Naive thymus-derived CD4-positive, alpha-beta T cell (primary cell): ENCODE measurements at regions of chr6 and their contacts with region 1.

Region 1: DNA sequence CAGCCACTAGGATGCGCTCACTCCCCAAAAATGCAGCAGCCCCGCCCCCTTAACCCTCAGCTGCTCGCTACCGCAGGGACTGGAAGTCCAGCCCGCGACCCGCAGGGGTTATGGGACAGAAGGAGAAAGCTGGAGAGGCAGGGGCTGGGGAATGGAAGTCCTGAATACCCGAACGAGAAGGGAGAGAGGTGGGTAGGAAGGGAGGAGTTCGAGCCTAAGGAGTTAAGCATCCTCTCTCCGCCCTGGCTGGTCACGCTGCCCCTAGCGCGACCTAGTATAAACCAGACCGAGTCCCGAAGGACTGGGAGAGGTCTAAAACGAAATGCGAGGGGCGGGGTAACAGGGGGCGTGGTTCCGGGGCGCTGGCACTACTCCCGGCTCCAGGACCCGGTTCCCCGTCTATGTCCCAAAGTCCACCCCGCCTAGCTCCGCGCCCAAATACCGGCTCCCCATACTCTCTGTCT is 448 bp upstream of the DDAH2 start:
- DNase-seq: peak; percentile 66 to 82 (median 77)
- ATAC-seq: peak; percentile 78
- H3K4me3 ChIP-seq: peak overlapping the region; percentile 92
- H3K4me3 Mint-ChIP-seq: peak overlapping the region; percentile 83 to 100 (median 97)
- H3K27ac ChIP-seq: peak overlapping the region; percentile 65
- H3K27ac Mint-ChIP-seq: peak overlapping the region; percentile 78 to 96 (median 89)
- H3K4me1 ChIP-seq: peaks cover 18 to 20% of the 10 kb centered on the region in 2 donors
- H3K4me1 Mint-ChIP-seq: peaks cover 20 to 65% (median 55%) of the 10 kb centered on the region in 7 donors
- H3K27me3 ChIP-seq: no peaks in the 10 kb centered on the region
- H3K27me3 Mint-ChIP-seq: no peaks in the 10 kb centered on the region

Region 2: DNA sequence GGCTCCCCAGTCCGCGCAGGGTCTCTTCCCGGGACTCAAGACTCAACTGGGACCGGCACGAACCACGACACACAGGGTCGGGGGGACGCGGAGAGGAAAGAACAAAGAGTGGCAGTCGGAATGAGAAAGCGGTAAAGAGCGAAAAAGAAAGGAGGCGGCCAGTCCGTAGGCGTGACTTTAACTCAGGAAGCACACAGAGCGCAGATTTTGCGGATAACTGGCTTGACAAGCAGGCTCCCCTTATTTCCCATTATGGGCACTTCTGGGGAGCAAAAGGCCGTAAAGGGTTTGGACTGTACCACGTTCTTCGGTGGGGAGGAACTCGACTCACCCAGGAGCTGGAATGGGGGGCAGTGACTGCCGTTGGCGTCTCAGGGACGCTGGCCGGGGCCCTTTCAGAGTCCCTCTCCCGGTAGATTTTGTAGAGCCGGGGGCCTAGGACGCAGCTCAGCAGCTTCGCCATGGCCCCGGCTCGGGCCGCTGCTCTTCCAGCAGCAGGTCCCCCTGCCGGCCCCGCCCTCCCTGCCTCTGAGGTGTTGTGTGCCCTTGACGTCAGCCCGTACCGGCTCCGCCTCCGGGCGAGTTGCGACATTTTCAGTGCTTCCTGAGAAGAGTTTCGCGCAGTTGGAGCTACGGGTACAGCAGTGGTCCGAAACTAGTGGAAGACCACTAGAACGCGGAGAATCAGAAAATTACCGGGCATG is 26.6 kb before region 1 on chr6 and contains the start of gene ABHD16A:
- CTCF ChIA-PET with region 1: interaction called, 3 read pairs
- POLR2A ChIA-PET with region 1: interaction called, 5 read pairs
- intact Hi-C with region 1: loop called in 1 of 2 experiments (anchors 1 kb)
- DNase-seq: peak; percentile 93 to 97 (median 96)
- ATAC-seq: peak; percentile 95
- H3K4me3 ChIP-seq: peak within 1 kb of the TSS; percentile 98
- H3K4me3 Mint-ChIP-seq: peak within 1 kb of the TSS; percentile 92 to 100 (median 98)
- H3K27ac ChIP-seq: peak within 1 kb of the TSS; percentile 98
- H3K27ac Mint-ChIP-seq: peak within 1 kb of the TSS; percentile 95 to 98 (median 97)
- H3K4me1 ChIP-seq: peaks cover 21 to 28% of the 10 kb centered on the region in 2 donors
- H3K4me1 Mint-ChIP-seq: peaks cover 16 to 39% (median 31%) of the 10 kb centered on the region in 7 donors
- H3K27me3 ChIP-seq: no peaks in the 10 kb centered on the region
- H3K27me3 Mint-ChIP-seq: peaks cover 0 to 2% (median 0%) of the 10 kb centered on the region in 5 donors
- total RNA-seq, gene ABHD16A: 60.1 to 71.7 (median 65.2) TPM

Region 3: GRCh38 chr6:31795616-31796298 is 66.2 kb after region 1 on chr6 and contains the start of gene VARS1:
- CTCF ChIA-PET with region 1: interaction called, 13 read pairs
- POLR2A ChIA-PET with region 1: interaction called, 7 read pairs
- intact Hi-C with region 1: loop called in 1 of 2 experiments (anchors 1 kb)
- DNase-seq: peak; percentile 75 to 92 (median 85)
- ATAC-seq: peak; percentile 96
- H3K4me3 ChIP-seq: peak within 1 kb of the TSS; percentile 76
- H3K4me3 Mint-ChIP-seq: peak within 1 kb of the TSS; percentile 85 to 99 (median 96)
- H3K27ac ChIP-seq: peak within 1 kb of the TSS; percentile 93
- H3K27ac Mint-ChIP-seq: peak within 1 kb of the TSS; percentile 80 to 99 (median 98)
- H3K4me1 ChIP-seq: peaks cover 24 to 32% of the 10 kb centered on the region in 2 donors
- H3K4me1 Mint-ChIP-seq: peaks cover 12 to 55% (median 36%) of the 10 kb centered on the region in 7 donors
- H3K27me3 ChIP-seq: no peaks in the 10 kb centered on the region
- H3K27me3 Mint-ChIP-seq: no peaks in the 10 kb centered on the region
- total RNA-seq, gene VARS1: 34.3 to 84.2 (median 53.2) TPM

Region 4: DNA sequence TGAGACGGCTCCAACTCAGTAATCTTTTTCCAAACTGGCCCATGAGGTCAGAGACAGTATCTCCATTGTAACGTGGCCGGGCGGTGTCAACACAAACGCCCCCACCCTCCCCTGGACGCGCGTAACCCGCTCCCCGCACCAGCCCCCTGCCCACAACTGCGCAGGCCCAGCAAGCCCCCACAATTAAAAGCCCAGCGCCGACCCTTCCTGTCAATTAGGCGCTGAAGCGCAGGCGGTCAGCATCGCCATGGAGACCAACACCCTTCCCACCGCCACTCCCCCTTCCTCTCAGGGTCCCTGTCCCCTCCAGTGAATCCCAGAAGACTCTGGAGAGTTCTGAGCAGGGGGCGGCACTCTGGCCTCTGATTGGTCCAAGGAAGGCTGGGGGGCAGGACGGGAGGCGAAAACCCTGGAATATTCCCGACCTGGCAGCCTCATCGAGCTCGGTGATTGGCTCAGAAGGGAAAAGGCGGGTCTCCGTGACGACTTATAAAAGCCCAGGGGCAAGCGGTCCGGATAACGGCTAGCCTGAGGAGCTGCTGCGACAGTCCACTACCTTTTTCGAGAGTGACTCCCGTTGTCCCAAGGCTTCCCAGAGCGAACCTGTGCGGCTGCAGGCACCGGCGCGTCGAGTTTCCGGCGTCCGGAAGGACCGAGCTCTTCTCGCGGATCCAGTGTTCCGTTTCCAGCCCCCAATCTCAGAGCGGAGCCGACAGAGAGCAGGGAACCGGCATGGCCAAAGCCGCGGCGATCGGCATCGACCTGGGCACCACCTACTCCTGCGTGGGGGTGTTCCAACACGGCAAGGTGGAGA is 85.7 kb after region 1 on chr6 and contains the starts of genes HSPA1A and HSPA1L:
- CTCF ChIA-PET with region 1: interaction called, 6 read pairs
- POLR2A ChIA-PET with region 1: interaction called, 6 read pairs
- intact Hi-C with region 1: loop called in 1 of 2 experiments (anchors 2 kb)
- DNase-seq: peak in 6 of 9 donors; percentile 32 to 81 (median 42)
- ATAC-seq: peak; percentile 43
- H3K4me3 ChIP-seq: peak within 1 kb of the TSS; percentile 68
- H3K4me3 Mint-ChIP-seq: peak within 1 kb of the TSS; percentile 85 to 96 (median 94)
- H3K27ac ChIP-seq: peak within 1 kb of the TSS; percentile 78
- H3K27ac Mint-ChIP-seq: peak within 1 kb of the TSS; percentile 86 to 93 (median 90)
- H3K4me1 ChIP-seq: peaks cover 21 to 30% of the 10 kb centered on the region in 2 donors
- H3K4me1 Mint-ChIP-seq: peaks cover 7 to 44% (median 39%) of the 10 kb centered on the region in 7 donors
- H3K27me3 ChIP-seq: no peaks in the 10 kb centered on the region
- H3K27me3 Mint-ChIP-seq: no peaks in the 10 kb centered on the region
- total RNA-seq, gene HSPA1A: 6.7 to 125 (median 30.3) TPM
- total RNA-seq, gene HSPA1L: 3.3 to 5.5 (median 4.7) TPM

Region 5: GRCh38 chr6:31901953-31902643 is 172.6 kb after region 1 on chr6 and contains the start of gene ZBTB12:
- CTCF ChIA-PET with region 1: no interaction called
- POLR2A ChIA-PET with region 1: no interaction called
- intact Hi-C with region 1: loop called in 1 of 2 experiments (anchors 1 kb)
- DNase-seq: peak; percentile 76 to 90 (median 84)
- ATAC-seq: peak; percentile 76
- H3K4me3 ChIP-seq: peak within 1 kb of the TSS; percentile 80
- H3K4me3 Mint-ChIP-seq: peak within 1 kb of the TSS; percentile 81 to 96 (median 88)
- H3K27ac ChIP-seq: peak within 1 kb of the TSS; percentile 83
- H3K27ac Mint-ChIP-seq: peak within 1 kb of the TSS; percentile 75 to 94 (median 86)
- H3K4me1 ChIP-seq: peaks cover 12 to 16% of the 10 kb centered on the region in 2 donors
- H3K4me1 Mint-ChIP-seq: peaks cover 18 to 34% (median 32%) of the 10 kb centered on the region in 7 donors
- H3K27me3 ChIP-seq: no peaks in the 10 kb centered on the region
- H3K27me3 Mint-ChIP-seq: peaks cover 0 to 11% (median 0%) of the 10 kb centered on the region in 5 donors
- total RNA-seq, gene ZBTB12: 0.77 to 4.5 (median 2.5) TPM